ENCODE measurements at regions of chr17 and their contacts with region 1.

Region 1: DNA sequence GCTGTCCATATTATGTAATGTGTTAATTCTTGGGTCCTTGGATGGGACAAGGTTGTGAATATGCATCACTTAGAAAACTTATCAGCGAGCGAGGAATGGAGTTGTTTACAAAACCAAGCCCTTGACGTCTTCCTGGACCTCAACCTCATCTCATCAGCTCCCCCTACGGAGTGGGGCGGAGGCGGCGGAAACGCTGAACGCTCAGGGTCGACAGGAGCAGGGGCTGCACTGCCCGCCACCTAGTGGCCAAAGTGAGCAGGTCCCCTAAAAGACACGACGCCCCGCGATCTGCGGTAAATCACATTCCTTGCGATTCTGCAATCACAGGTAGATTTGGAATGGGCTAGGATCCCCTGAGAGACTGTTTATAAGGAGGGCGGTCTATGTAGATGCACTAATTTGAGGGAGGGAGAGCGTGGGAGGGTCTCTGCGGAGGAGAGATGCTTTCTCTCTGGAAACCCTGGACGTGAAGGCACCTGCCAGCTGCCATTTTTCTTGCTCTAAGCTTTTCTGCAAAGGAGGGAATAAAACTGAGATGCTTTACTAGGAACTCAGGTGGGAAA is 5.4 kb upstream of the ICAM2 start:
- DNase-seq: peak; percentile 89 to 98
- ATAC-seq: peak; percentile 70 to 90 (median 78)
- H3K4me3 ChIP-seq: peak overlapping the region; percentile 7
- H3K4me3 Mint-ChIP-seq: peak overlapping the region; percentile 93
- H3K27ac ChIP-seq: peak overlapping the region; percentile 96
- H3K27ac Mint-ChIP-seq: peak overlapping the region; percentile 98 to 100
- H3K4me1 ChIP-seq: peaks cover 56% of the 10 kb centered on the region
- H3K4me1 Mint-ChIP-seq: peaks cover 48 to 51% of the 10 kb centered on the region in 2 donors
- H3K27me3 ChIP-seq: no peaks in the 10 kb centered on the region
- H3K27me3 Mint-ChIP-seq: no peaks in the 10 kb centered on the region
- CTCF ChIP-seq: peak; percentile 97

Region 2: DNA sequence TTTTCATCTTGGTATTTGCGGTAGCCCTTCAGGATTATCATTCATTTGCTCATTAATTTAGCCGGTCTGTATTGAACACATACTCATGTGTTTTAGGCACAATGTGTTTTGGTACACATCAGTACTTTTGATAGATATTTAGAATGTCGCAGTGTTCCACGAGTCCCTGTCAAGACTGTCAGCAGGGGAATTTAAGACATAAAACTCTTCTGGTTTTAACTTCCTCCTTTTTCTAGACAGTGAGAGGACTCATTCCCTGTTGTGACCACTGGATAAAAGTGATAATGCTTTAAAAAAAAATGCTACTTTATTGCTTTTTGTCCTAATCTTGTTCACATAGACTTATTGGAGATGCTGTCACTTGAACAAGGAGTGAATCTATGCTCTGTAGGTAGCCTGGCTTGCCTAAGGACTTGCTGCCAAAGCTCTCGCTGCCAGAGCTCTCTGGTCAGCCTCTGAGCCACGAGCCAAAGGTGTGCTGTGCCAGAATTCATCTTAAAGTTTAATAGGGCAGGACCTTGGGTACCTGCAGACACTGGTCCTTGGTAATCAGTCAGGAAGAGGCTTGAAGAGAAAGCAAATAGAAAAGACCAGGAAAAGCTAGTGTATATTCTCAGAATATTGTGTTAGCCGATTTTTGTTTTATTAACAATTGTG is 470.2 kb before region 1 on chr17:
- intact Hi-C with region 1: no loop called
- DNase-seq: no peak
- ATAC-seq: no peak
- H3K4me3 ChIP-seq: no peak overlapping the region
- H3K4me3 Mint-ChIP-seq: no peak overlapping the region
- H3K27ac ChIP-seq: no peak overlapping the region
- H3K27ac Mint-ChIP-seq: peak overlapping the region; percentile 72 to 78
- H3K4me1 ChIP-seq: peaks cover 20% of the 10 kb centered on the region
- H3K4me1 Mint-ChIP-seq: peaks cover 58 to 79% of the 10 kb centered on the region in 2 donors
- H3K27me3 ChIP-seq: no peaks in the 10 kb centered on the region
- H3K27me3 Mint-ChIP-seq: no peaks in the 10 kb centered on the region
- CTCF ChIP-seq: no peak

Region 3: DNA sequence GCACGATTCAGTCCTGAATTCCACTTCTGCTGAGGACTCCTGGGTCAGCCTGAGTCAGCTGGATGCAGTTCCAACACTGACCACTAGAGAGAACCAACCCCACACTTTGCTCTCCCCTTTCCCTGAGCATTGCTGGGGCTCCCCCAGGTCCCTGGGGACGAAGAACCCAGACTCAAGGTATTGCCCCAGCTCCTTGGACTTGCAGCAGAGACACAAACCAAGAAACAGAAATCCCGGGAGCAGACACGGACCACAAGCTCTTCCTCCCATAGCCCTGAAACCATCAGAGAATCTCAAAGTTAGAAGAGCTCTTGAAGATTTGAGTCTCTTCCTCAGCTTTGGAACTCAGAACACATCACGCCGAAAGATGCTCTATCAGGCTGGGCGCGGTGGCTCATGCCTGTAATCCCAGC is 106.5 kb before region 1 on chr17:
- intact Hi-C with region 1: loop called (anchors 1 kb)
- DNase-seq: peak; percentile 64 to 91
- ATAC-seq: peak; percentile 91 to 100 (median 100)
- H3K4me3 ChIP-seq: no peak overlapping the region
- H3K4me3 Mint-ChIP-seq: no peak overlapping the region
- H3K27ac ChIP-seq: no peak overlapping the region
- H3K27ac Mint-ChIP-seq: peak overlapping the region in 1 of 2 donors; percentile 68
- H3K4me1 ChIP-seq: peaks cover 19% of the 10 kb centered on the region
- H3K4me1 Mint-ChIP-seq: peaks cover 8 to 11% of the 10 kb centered on the region in 2 donors
- H3K27me3 ChIP-seq: no peaks in the 10 kb centered on the region
- H3K27me3 Mint-ChIP-seq: peaks cover 4 to 7% of the 10 kb centered on the region in 2 donors
- CTCF ChIP-seq: peak; percentile 95

Region 4: DNA sequence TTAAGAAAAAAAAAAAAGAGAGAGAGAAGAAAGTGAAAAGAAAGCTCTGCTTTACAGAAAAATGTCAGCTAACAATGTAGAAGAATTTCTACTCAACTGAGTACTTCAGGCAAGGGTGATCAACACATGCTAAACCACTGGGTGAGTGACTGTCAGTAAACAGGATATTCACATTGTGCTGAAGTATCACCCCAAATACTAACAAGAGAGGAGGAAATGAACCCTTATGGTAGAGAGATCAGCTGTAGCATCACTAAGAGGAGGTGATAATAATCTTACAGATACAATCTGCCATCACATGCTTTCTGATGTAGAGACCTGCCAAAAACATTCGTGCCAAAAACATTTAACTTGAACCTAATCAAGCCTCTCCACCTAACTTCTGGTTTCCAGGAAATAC is 25.3 kb after region 1 on chr17:
- intact Hi-C with region 1: loop called (anchors 2 kb)
- DNase-seq: peak in 1 of 2 donors; percentile 74
- ATAC-seq: peak; percentile 99 to 100 (median 99)
- H3K4me3 ChIP-seq: no peak overlapping the region
- H3K4me3 Mint-ChIP-seq: peak overlapping the region; percentile 51
- H3K27ac ChIP-seq: peak overlapping the region; percentile 78
- H3K27ac Mint-ChIP-seq: peak overlapping the region; percentile 90 to 94
- H3K4me1 ChIP-seq: peaks cover 33% of the 10 kb centered on the region
- H3K4me1 Mint-ChIP-seq: peaks cover 26 to 36% of the 10 kb centered on the region in 2 donors
- H3K27me3 ChIP-seq: no peaks in the 10 kb centered on the region
- H3K27me3 Mint-ChIP-seq: no peaks in the 10 kb centered on the region
- CTCF ChIP-seq: no peak

Region 5: GRCh38 chr17:64129764-64130558 is 104.1 kb after region 1 on chr17 and contains the start of gene ERN1:
- intact Hi-C with region 1: loop called (anchors 1 kb)
- DNase-seq: peak; percentile 90 to 93
- ATAC-seq: peak; percentile 88 to 97 (median 89)
- H3K4me3 ChIP-seq: peak within 1 kb of the TSS; percentile 50
- H3K4me3 Mint-ChIP-seq: peak within 1 kb of the TSS; percentile 92
- H3K27ac ChIP-seq: peak within 1 kb of the TSS; percentile 84
- H3K27ac Mint-ChIP-seq: peak within 1 kb of the TSS; percentile 88 to 91
- H3K4me1 ChIP-seq: peaks cover 16% of the 10 kb centered on the region
- H3K4me1 Mint-ChIP-seq: peaks cover 34 to 48% of the 10 kb centered on the region in 2 donors
- H3K27me3 ChIP-seq: no peaks in the 10 kb centered on the region
- H3K27me3 Mint-ChIP-seq: no peaks in the 10 kb centered on the region
- CTCF ChIP-seq: no peak
- total RNA-seq, gene ERN1: 52.9 to 90.5 (median 67.2) TPM

Region 6: GRCh38 chr17:64262417-64263260 is 236.8 kb after region 1 on chr17 and contains the start of gene TEX2:
- intact Hi-C with region 1: loop called (anchors 5 kb)
- DNase-seq: peak; percentile 52 to 83
- ATAC-seq: peak; percentile 38 to 58 (median 39)
- H3K4me3 ChIP-seq: peak within 1 kb of the TSS; percentile 82
- H3K4me3 Mint-ChIP-seq: peak within 1 kb of the TSS; percentile 95
- H3K27ac ChIP-seq: peak within 1 kb of the TSS; percentile 75
- H3K27ac Mint-ChIP-seq: peak within 1 kb of the TSS; percentile 87 to 93
- H3K4me1 ChIP-seq: peaks cover 20% of the 10 kb centered on the region
- H3K4me1 Mint-ChIP-seq: peaks cover 30 to 33% of the 10 kb centered on the region in 2 donors
- H3K27me3 ChIP-seq: no peaks in the 10 kb centered on the region
- H3K27me3 Mint-ChIP-seq: peaks cover 0 to 4% of the 10 kb centered on the region in 2 donors
- CTCF ChIP-seq: no peak
- total RNA-seq, gene TEX2: 8.3 to 16.3 (median 11.3) TPM